ENCODE measurements at regions of chr9 and their contacts with region 1.

Region 1: DNA sequence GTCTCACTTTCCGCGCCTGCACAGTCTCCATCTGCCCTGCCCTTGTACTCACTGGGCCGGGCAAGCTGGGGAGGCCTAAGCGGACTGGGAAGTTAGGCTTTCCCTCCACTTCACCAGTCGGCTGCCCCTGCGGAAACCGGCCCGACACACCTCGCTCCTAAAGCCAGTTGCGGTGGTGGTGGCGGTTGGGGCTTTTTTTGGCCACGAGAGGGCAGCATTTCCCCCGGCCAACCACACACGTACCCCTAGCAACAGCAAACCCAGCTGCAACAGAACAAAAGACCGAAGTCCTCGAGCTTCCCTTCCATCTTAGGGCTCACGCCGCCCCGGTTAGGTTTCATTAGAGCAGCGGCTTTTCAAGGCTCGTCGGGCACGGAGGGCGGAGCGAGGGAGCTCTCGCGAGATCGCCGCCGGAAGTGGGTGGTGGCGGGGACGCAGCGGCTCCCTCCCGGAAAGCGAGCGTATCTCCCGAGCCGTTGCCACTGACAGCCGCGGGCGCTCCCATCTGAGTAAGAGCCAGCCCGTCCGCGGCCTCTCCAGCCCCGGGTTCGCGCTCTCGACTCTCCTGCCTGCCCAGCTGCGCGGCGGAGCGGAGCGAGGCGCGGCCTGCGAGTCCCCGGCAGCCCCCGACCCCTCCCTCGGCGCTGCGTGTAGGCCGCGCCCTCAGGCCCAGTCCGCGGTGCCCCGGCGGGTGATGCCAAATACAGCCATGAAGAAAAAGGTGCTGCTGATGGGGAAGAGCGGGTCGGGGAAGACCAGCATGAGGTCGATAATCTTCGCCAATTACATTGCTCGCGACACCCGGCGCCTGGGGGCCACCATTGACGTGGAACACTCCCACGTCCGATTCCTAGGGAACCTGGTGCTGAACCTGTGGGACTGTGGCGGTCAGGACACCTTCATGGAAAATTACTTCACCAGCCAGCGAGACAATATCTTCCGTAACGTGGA is at the start of gene RRAGA:
- DNase-seq: peak; percentile 96
- H3K4me3 ChIP-seq: peak within 1 kb of the TSS; percentile 77 to 81 (median 80)
- H3K27ac ChIP-seq: peak within 1 kb of the TSS; percentile 94 to 98 (median 97)
- H3K4me1 ChIP-seq: peaks cover 20 to 40% (median 27%) of the 10 kb centered on the region in 4 donors
- H3K27me3 ChIP-seq: no peaks in the 10 kb centered on the region
- CTCF ChIP-seq: peak; percentile 78 to 97 (median 90)
- EP300 ChIP-seq: no peak
- POLR2A ChIP-seq: peak; percentile 91
- total RNA-seq, gene RRAGA: 35.0 to 47.0 (median 39.6) TPM

Region 2: DNA sequence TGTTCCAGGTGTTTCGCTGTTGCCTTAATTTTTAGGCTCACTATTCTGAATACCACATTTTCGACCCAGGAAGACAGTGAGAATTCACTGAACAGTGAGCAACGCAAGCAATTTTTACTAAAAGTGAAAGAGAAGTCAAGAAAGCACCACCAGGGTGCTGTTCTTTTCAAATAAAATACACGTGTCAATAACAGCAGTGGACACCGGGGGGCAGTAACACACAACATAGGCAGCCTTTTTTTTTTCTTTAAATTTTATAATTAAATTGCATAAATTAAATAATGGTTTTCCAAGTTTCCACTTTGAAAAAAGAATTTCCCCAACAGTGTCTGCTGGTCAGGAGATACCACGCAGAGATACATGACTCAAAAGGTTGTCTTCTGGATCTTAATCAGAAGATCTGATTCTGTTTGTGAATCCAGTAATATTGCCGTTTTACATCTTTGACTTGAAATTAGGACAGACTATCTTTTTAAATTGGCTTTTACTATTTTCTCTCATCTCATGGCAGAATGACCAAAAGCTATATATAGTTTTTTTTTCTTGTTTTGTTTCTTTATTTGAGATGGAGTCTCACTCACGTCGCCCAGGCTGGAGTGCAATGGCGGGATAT is 1517.5 kb before region 1 on chr9:
- in situ Hi-C with region 1: loop called in 3 of 4 experiments (anchors 25 kb)
- intact Hi-C with region 1: no loop called
- DNase-seq: peak; percentile 25
- H3K4me3 ChIP-seq: no peak overlapping the region
- H3K27ac ChIP-seq: no peak overlapping the region
- H3K4me1 ChIP-seq: no peaks in the 10 kb centered on the region
- H3K27me3 ChIP-seq: no peaks in the 10 kb centered on the region
- CTCF ChIP-seq: peak; percentile 62 to 79 (median 70)
- EP300 ChIP-seq: no peak
- POLR2A ChIP-seq: no peak

Region 3: DNA sequence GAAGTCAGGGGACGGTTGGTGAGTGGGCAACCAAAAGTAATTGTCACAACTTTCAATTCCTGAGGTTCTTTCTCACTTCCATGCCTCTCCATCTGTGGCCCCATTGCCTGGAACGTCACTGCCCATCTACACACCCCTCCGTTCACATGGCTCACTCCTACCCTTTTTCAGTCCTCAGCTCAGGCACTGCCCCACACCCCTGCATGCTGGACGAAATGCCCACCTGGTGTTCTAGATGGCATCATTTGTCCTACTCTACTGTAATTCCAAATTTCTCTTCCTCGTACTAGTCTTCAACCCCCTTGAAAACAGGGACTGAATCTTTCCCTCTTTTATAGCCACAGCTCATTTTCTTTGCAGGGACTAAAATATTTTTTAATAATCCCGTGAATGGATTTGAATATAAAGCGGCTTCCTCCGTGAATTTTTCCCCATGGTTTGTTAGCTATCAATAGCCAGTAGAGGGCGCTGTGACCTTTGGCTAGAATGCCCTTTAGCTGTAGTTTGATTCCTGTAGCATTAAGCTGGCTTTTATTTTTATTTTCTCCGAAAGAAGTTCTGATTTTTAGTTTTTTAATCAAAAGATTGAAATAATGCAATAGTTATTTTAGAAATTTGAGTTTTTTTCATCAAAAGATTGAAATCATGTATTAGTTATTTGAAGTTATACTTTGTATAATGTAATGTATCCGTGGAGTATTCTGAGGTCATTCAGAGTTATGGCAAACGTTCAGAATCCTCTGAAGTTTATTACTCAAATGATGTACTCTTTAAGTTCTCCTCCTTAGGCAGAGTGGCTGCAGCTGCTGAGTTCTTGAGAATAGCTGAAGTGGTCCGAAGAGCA is 1238.3 kb before region 1 on chr9:
- in situ Hi-C with region 1: loop called in 2 of 4 experiments (anchors 25 kb)
- intact Hi-C with region 1: no loop called
- DNase-seq: peak; percentile 60
- H3K4me3 ChIP-seq: no peak overlapping the region
- H3K27ac ChIP-seq: no peak overlapping the region
- H3K4me1 ChIP-seq: peaks cover 0 to 14% (median 2%) of the 10 kb centered on the region in 4 donors
- H3K27me3 ChIP-seq: no peaks in the 10 kb centered on the region
- CTCF ChIP-seq: peak; percentile 81 to 90 (median 84)
- EP300 ChIP-seq: no peak
- POLR2A ChIP-seq: no peak

Region 4: GRCh38 chr9:18347386-18348082 is 701.7 kb before region 1 on chr9:
- in situ Hi-C with region 1: no loop called
- intact Hi-C with region 1: no loop called
- DNase-seq: no peak
- H3K4me3 ChIP-seq: no peak overlapping the region
- H3K27ac ChIP-seq: no peak overlapping the region
- H3K4me1 ChIP-seq: no peaks in the 10 kb centered on the region
- H3K27me3 ChIP-seq: no peaks in the 10 kb centered on the region
- CTCF ChIP-seq: no peak
- EP300 ChIP-seq: no peak
- POLR2A ChIP-seq: no peak

Region 5: GRCh38 chr9:18632632-18633403 is 416.4 kb before region 1 on chr9:
- in situ Hi-C with region 1: no loop called
- intact Hi-C with region 1: no loop called
- DNase-seq: no peak
- H3K4me3 ChIP-seq: no peak overlapping the region
- H3K27ac ChIP-seq: peak overlapping the region; percentile 29 to 31 (median 30)
- H3K4me1 ChIP-seq: peaks cover 0 to 10% (median 3%) of the 10 kb centered on the region in 4 donors
- H3K27me3 ChIP-seq: no peaks in the 10 kb centered on the region
- CTCF ChIP-seq: no peak
- EP300 ChIP-seq: no peak
- POLR2A ChIP-seq: no peak

Region 6: GRCh38 chr9:18834740-18835361 is 214.4 kb before region 1 on chr9:
- in situ Hi-C with region 1: no loop called
- intact Hi-C with region 1: no loop called
- DNase-seq: no peak
- H3K4me3 ChIP-seq: no peak overlapping the region
- H3K27ac ChIP-seq: no peak overlapping the region
- H3K4me1 ChIP-seq: no peaks in the 10 kb centered on the region
- H3K27me3 ChIP-seq: no peaks in the 10 kb centered on the region
- CTCF ChIP-seq: no peak
- EP300 ChIP-seq: no peak
- POLR2A ChIP-seq: no peak

Measured in transverse colon (tissue), 4 donors.